ENCODE measurements at regions of chr10 and their contacts with region 1.

Region 1: GRCh38 chr10:70925377-70926225 is 37.2 kb upstream of the PCBD1 start:
- DNase-seq: peak in 4 of 5 donors; percentile 50 to 82 (median 64)
- H3K4me3 ChIP-seq: no peak overlapping the region
- H3K27ac ChIP-seq: no peak overlapping the region
- H3K4me1 ChIP-seq: no peaks in the 10 kb centered on the region
- H3K27me3 ChIP-seq: no peaks in the 10 kb centered on the region
- CTCF ChIP-seq: peak; percentile 93

Region 2: DNA sequence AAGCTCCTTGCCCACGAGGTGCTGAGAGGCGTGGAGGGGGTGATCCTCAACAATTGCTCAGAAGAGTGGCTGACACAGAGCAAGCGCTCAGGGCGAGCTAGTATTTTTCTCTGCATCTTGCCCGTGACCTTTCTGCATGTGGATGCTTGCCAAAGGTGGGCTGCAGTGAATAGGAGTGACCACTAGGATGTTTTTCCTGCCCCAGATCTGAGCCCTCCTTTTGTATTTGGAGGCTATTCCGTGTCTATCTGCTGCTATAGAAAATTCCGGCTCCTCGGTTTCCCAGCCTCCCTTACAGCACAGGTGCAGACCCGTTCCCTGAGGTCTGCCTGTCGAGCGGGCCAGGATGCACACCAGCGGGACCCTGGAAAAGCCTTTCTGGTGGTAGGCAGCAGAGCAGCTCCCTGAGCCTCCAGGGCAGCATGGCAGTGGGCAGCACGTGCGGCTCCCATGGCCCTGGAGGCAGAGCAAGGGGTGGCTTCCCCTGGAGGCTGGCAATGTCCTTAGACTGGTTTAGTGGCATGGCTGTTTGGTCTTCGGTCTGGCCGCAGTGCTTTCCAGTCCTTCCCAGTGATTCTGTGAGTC is 107.9 kb after region 1 on chr10:
- intact Hi-C with region 1: no loop called
- DNase-seq: no peak
- H3K4me3 ChIP-seq: no peak overlapping the region
- H3K27ac ChIP-seq: no peak overlapping the region
- H3K4me1 ChIP-seq: no peaks in the 10 kb centered on the region
- H3K27me3 ChIP-seq: no peaks in the 10 kb centered on the region
- CTCF ChIP-seq: no peak

Region 3: GRCh38 chr10:71212318-71213126 is 286.9 kb after region 1 on chr10 and contains the start of gene UNC5B:
- intact Hi-C with region 1: loop called (anchors 10 kb)
- DNase-seq: peak; percentile 96 to 98 (median 97)
- H3K4me3 ChIP-seq: peak within 1 kb of the TSS; percentile 58 to 82 (median 77)
- H3K27ac ChIP-seq: peak within 1 kb of the TSS; percentile 40 to 45
- H3K4me1 ChIP-seq: peaks cover 3 to 20% (median 16%) of the 10 kb centered on the region in 3 donors
- H3K27me3 ChIP-seq: peaks cover 2% of the 10 kb centered on the region
- CTCF ChIP-seq: peak; percentile 19
- total RNA-seq, gene UNC5B: 22.6 TPM

Measured in kidney (tissue), 22 donors.